MCF 10A (cell line): ENCODE measurements at regions of chr2 and their contacts with region 1.

Region 1: DNA sequence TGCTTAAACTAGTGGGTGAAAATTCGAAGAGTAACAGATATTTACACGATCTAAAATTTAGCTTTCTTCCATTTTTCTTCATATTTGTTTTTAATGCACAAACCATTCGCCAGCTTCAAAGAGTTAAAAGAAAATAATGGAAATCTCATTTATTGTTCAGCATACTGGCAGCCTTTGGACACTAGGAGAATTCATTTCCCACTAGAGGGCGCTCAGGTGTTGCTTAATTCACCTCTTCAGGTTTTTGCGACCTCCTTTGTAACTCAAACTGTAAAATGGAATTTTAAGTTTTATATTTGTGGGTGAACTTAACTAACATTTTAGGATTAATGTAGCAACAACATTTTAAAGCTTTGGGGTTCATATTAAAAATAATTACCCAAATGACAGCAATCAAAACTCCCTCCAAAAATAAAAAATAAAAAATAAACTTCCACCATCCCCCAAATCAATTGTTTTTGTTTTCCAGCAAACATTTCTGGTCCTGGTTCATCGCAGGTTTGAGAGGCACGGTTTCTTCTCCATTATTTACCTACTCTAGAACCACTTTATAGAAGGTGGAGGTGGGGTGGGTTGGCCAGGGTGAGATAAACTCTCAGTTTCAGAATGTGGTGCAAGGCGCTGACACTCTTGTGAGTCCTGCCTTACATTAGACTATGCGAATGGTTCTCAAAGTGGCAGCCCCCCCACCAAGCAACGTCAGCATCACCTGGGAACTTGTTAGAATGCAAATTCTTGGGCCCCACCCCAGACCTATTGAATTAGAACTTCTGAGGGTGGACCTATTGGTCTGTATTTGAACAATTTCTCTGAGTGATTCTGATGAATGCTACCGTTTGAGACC is 24.7 kb upstream of the PNPT1 start:
- DNase-seq: peak; percentile 86
- H3K4me3 Mint-ChIP-seq: no peak overlapping the region
- H3K27ac Mint-ChIP-seq: peak overlapping the region; percentile 25
- H3K4me1 Mint-ChIP-seq: no peaks in the 10 kb centered on the region
- H3K27me3 Mint-ChIP-seq: no peaks in the 10 kb centered on the region
- CTCF ChIP-seq: peak; percentile 77

Region 2: GRCh38 chr2:54166121-54166773 is 1552.1 kb before region 1 on chr2:
- CTCF ChIA-PET with region 1: no interaction called
- POLR2A ChIA-PET with region 1: no interaction called
- intact Hi-C with region 1: no loop called
- DNase-seq: no peak
- H3K4me3 Mint-ChIP-seq: no peak overlapping the region
- H3K27ac Mint-ChIP-seq: no peak overlapping the region
- H3K4me1 Mint-ChIP-seq: no peaks in the 10 kb centered on the region
- H3K27me3 Mint-ChIP-seq: no peaks in the 10 kb centered on the region
- CTCF ChIP-seq: no peak

Region 3: DNA sequence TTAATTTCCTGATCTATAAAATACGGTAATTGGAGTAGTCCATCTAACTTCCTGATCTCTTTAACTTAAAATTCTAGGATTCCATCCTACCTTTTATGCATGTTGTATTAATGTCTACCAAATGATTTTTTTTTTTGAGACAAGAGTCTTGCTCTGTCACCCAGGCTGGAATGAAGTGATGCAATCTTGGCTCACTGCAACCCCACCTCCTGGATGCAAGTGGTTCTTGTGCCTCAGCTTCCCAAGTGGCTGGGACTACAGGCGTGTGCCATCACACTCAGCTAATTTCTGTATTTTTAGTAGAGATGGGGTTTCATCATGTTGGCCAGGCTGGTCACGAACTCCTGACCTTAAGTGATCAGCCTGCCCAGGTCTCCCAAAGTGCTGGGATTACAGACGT is 151.1 kb before region 1 on chr2:
- CTCF ChIA-PET with region 1: no interaction called
- POLR2A ChIA-PET with region 1: no interaction called
- intact Hi-C with region 1: no loop called
- DNase-seq: no peak
- H3K4me3 Mint-ChIP-seq: no peak overlapping the region
- H3K27ac Mint-ChIP-seq: peak overlapping the region; percentile 67
- H3K4me1 Mint-ChIP-seq: peaks cover 6% of the 10 kb centered on the region
- H3K27me3 Mint-ChIP-seq: no peaks in the 10 kb centered on the region
- CTCF ChIP-seq: no peak

Region 4: DNA sequence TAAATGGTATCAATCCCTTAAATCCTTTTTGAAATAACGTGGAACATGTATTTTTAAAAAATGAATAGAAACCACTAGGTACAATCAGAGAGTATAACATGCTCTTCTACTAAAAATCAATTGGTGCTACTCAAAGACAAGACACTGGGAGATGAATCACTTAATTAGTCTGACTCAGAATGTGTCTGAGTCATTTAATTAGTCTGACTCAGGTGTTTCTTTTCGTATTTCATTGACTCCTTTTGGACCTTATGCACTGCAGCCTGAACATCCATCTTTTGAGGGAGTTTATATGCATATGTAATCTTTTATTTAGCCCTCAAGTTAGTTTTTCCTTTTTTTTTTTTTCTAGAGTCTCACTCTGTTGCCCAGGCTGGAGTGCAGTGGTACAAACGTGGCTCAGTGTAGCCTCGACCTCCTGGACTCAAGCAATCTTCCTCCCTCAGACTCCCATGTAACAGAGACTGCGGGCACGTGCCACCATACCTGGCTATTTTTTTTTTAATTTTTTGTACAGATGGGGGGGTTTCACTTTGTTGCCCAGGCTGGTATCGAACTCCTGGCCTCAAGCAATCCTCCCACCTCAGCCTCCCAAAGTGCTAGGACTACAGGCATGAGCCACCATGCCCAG is 127.5 kb before region 1 on chr2:
- CTCF ChIA-PET with region 1: no interaction called
- POLR2A ChIA-PET with region 1: no interaction called
- intact Hi-C with region 1: no loop called
- DNase-seq: peak; percentile 78
- H3K4me3 Mint-ChIP-seq: no peak overlapping the region
- H3K27ac Mint-ChIP-seq: peak overlapping the region; percentile 12
- H3K4me1 Mint-ChIP-seq: peaks cover 5% of the 10 kb centered on the region
- H3K27me3 Mint-ChIP-seq: no peaks in the 10 kb centered on the region
- CTCF ChIP-seq: no peak

Region 5: DNA sequence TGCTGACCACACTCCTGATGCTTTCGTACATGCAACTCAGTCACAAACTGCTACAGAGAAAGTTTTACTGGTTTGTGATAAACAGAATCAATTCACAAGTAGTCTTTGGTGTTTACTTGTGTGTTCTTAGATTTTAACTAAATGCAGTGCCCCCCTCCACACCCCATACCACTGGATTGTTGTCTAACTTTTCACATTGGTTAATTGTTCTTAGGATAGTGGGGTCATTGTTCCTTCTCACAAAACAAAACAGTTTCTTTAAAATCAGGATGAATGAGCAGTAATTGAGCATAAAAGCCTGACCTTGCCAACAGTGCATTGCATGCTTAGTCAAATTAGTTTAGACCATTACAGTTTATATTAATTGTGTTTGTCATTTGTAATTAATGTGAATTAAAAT is 10.6 kb before region 1 on chr2:
- CTCF ChIA-PET with region 1: interaction called, 14 read pairs
- POLR2A ChIA-PET with region 1: no interaction called
- intact Hi-C with region 1: no loop called
- DNase-seq: no peak
- H3K4me3 Mint-ChIP-seq: no peak overlapping the region
- H3K27ac Mint-ChIP-seq: no peak overlapping the region
- H3K4me1 Mint-ChIP-seq: no peaks in the 10 kb centered on the region
- H3K27me3 Mint-ChIP-seq: peaks cover 8% of the 10 kb centered on the region
- CTCF ChIP-seq: no peak

Region 6: DNA sequence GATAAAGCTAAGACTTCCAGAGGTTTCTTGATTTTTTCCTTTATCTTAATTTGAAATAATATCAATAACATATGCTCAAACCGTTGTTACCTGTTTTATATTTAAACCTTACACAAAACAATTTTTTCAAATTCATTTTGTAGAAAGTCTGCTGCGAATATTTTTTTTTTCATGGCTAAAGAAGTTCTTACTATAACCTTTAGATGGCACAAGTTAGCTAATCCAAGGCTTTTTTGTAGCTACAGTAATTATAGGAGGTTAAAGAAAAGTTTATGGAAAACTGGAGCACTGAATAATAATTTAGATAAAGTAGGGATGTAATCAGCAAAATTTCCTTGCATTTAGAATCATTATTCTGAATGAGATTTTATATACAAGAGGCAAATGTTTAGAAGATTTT is 53.2 kb after region 1 on chr2:
- CTCF ChIA-PET with region 1: interaction called, 92 read pairs
- POLR2A ChIA-PET with region 1: interaction called, 4 read pairs
- intact Hi-C with region 1: loop called (anchors 1 kb)
- DNase-seq: peak; percentile 56
- H3K4me3 Mint-ChIP-seq: no peak overlapping the region
- H3K27ac Mint-ChIP-seq: peak overlapping the region; percentile 35
- H3K4me1 Mint-ChIP-seq: peaks cover 51% of the 10 kb centered on the region
- H3K27me3 Mint-ChIP-seq: no peaks in the 10 kb centered on the region
- CTCF ChIP-seq: peak; percentile 66

Region 7: GRCh38 chr2:55862673-55863390 is 144.4 kb after region 1 on chr2:
- CTCF ChIA-PET with region 1: no interaction called
- POLR2A ChIA-PET with region 1: no interaction called
- intact Hi-C with region 1: loop called (anchors 10 kb)
- DNase-seq: peak; percentile 98
- H3K4me3 Mint-ChIP-seq: peak overlapping the region; percentile 47
- H3K27ac Mint-ChIP-seq: peak overlapping the region; percentile 93
- H3K4me1 Mint-ChIP-seq: peaks cover 26% of the 10 kb centered on the region
- H3K27me3 Mint-ChIP-seq: no peaks in the 10 kb centered on the region
- CTCF ChIP-seq: no peak

Region 8: DNA sequence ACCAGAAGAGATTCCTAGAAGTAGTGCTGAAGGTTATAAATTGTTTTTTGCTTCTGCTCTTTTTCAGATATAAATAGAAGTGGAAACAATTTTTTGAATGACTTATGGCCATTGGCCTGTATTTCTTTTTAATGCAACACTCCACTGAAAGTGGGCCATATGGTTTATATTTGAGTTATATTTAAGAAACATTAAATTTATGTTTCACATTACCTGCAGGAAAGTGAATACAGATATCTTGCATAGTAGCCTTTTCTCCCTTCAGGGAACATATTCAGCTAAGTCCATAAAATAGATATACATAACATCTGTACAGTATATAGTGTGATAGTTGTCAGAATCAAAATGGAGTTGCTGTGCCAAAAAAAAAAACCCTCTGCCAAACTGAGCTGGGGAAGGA is 258.3 kb after region 1 on chr2:
- CTCF ChIA-PET with region 1: interaction called, 12 read pairs
- POLR2A ChIA-PET with region 1: no interaction called
- intact Hi-C with region 1: no loop called
- DNase-seq: no peak
- H3K4me3 Mint-ChIP-seq: no peak overlapping the region
- H3K27ac Mint-ChIP-seq: no peak overlapping the region
- H3K4me1 Mint-ChIP-seq: no peaks in the 10 kb centered on the region
- H3K27me3 Mint-ChIP-seq: no peaks in the 10 kb centered on the region
- CTCF ChIP-seq: no peak

Region 9: DNA sequence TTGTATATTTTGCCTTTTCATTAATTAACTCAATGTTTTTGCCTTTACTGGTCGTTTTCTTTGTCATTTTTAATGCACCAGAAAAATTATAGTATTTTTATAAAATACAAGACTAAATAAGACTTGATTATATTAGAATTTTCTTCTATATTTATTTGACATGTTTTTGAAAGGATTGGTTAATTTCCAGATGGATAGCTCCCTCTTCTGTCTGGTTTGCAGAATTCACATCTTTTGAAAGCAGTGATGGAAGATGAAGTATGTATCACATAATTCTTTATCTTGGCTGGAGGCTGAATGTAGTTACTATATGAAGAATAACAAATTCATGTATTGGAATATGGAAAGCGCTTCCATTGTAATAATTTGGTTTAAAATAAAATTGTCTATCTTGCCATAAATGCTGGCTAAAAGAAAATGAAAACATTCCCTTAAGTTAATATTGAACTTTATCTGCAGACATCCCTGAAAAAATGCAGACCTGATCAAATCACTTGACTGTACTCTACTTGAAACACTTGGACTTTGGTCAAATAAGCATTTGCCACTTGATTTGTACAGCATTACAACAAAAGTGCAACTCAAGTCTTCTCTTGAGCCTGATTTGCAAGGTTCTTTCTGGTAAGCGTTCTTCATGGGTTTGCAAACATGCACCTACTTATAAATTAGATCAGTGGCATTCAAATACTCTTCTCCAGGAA is 291.5 kb after region 1 on chr2:
- CTCF ChIA-PET with region 1: interaction called, 68 read pairs
- POLR2A ChIA-PET with region 1: no interaction called
- intact Hi-C with region 1: loop called (anchors 1 kb)
- DNase-seq: peak; percentile 60
- H3K4me3 Mint-ChIP-seq: no peak overlapping the region
- H3K27ac Mint-ChIP-seq: no peak overlapping the region
- H3K4me1 Mint-ChIP-seq: peaks cover 5% of the 10 kb centered on the region
- H3K27me3 Mint-ChIP-seq: no peaks in the 10 kb centered on the region
- CTCF ChIP-seq: peak; percentile 68

Region 10: DNA sequence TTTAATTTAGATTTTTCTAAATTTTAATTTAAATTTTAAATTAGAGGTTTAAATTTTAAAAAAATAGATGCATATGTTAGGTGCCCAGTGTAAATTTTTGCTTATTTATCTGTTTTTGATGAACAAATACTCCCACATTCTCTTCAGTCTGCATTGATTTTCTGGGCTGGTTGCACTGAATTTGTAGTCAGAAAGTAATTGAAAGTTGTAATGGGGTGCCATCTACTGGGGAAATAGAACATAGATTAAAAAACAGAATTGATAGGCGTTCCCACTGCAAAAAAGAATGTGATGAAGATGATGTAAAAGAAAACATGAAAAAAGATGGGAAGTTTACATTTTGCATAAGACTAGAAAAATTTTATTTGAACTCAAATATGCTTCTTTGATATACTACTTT is 413.8 kb after region 1 on chr2:
- CTCF ChIA-PET with region 1: interaction called, 4 read pairs
- POLR2A ChIA-PET with region 1: no interaction called
- intact Hi-C with region 1: loop called (anchors 1 kb)
- DNase-seq: peak; percentile 66
- H3K4me3 Mint-ChIP-seq: no peak overlapping the region
- H3K27ac Mint-ChIP-seq: no peak overlapping the region
- H3K4me1 Mint-ChIP-seq: no peaks in the 10 kb centered on the region
- H3K27me3 Mint-ChIP-seq: no peaks in the 10 kb centered on the region
- CTCF ChIP-seq: peak; percentile 29